HCT116 (cell line): ENCODE measurements at regions of chr12 and their contacts with region 1.

Region 1: GRCh38 chr12:4604684-4605193 is 42.7 kb downstream of the DYRK4 start:
- DNase-seq: peak; percentile 81
- ATAC-seq: peak; percentile 92
- H3K4me3 ChIP-seq: peak overlapping the region; percentile 83 to 89
- H3K27ac ChIP-seq: peak overlapping the region; percentile 34; the same call in 1 of the 2 replicates
- H3K4me1 ChIP-seq: peaks cover 2 to 9% of the 10 kb centered on the region in 2 experiments; a peak in 1 of 4 replicates
- H3K27me3 ChIP-seq: no peaks in the 10 kb centered on the region; the same call in 1 of the 2 replicates
- CTCF ChIP-seq: peak; percentile 44 to 98 (median 96); a peak in 5 of 6 replicates
- POLR2A ChIP-seq: peak; percentile 32
- RAD21 ChIP-seq: peak; percentile 38; the same call in 1 of the 2 replicates

Region 2: DNA sequence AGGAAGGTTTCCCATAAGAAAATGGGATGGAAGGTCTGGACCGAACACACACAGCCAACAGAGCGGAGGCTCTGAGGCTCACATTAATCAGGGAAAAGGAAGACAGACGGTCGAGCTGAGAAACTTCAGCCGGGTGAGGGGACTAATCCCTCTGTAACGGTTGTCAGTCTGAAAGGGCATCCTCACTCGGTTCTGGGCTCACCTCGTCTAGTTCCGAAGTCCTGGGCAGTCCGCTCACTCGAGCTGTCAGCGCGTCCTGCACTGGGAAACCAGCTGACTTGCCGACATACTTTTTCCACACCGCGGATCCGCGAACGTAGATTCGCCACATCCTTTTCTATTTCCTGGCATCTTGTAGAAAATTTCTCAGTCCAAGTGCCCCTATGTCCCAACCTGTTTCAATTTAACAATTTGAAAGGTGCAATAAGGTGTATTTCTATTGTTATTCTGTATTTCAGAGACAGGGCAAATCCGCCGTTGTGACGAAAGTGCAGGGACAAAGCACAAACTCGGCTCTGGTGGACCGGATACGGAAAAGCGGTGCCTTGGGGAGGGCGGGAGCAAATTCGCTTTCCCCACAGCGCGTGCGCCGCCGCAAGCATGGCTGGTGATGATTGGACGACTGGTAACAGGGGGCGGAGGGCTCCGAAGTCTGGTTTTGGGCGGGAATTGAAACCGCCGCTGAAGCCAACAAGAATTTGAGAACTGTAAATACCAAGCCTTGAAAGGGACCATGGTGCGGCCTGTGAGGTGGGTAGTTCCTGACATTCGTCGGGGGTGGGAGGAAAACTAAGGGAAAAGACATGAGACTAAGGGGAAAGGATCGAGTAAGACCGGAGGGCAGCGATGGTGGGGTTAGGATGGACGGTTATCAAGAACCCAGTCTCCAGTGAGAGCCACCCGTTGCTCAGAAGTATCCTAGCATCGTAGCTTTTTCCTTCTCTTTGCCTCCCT is 66.3 kb before region 1 on chr12 and contains the start of gene RAD51AP1:
- CTCF ChIA-PET with region 1: no interaction called
- POLR2A ChIA-PET with region 1: no interaction called
- RAD21 ChIA-PET with region 1: no interaction called
- intact Hi-C with region 1: loop called (anchors 2 kb)
- DNase-seq: peak; percentile 96
- ATAC-seq: peak; percentile 99
- H3K4me3 ChIP-seq: peak within 1 kb of the TSS; percentile 92 to 96
- H3K27ac ChIP-seq: peak within 1 kb of the TSS; percentile 69
- H3K4me1 ChIP-seq: peaks cover 12 to 18% of the 10 kb centered on the region in 2 experiments
- H3K27me3 ChIP-seq: no peaks in the 10 kb centered on the region
- CTCF ChIP-seq: no peak
- POLR2A ChIP-seq: no peak
- RAD21 ChIP-seq: no peak
- total RNA-seq, gene RAD51AP1: 28.2 TPM

Region 3: GRCh38 chr12:4567073-4567881 is 37.5 kb before region 1 on chr12:
- CTCF ChIA-PET with region 1: no interaction called
- POLR2A ChIA-PET with region 1: no interaction called
- RAD21 ChIA-PET with region 1: no interaction called
- intact Hi-C with region 1: no loop called
- DNase-seq: no peak
- ATAC-seq: no peak
- H3K4me3 ChIP-seq: no peak overlapping the region
- H3K27ac ChIP-seq: no peak overlapping the region
- H3K4me1 ChIP-seq: no peaks in the 10 kb centered on the region
- H3K27me3 ChIP-seq: no peaks in the 10 kb centered on the region
- CTCF ChIP-seq: no peak
- POLR2A ChIP-seq: no peak
- RAD21 ChIP-seq: no peak

Region 4: GRCh38 chr12:4648501-4649357 is 44.0 kb after region 1 on chr12 and contains the starts of genes AKAP3 and NDUFA9:
- CTCF ChIA-PET with region 1: no interaction called
- POLR2A ChIA-PET with region 1: no interaction called
- RAD21 ChIA-PET with region 1: no interaction called
- intact Hi-C with region 1: loop called (anchors 2 kb)
- DNase-seq: peak; percentile 66
- ATAC-seq: peak; percentile 95
- H3K4me3 ChIP-seq: peak within 1 kb of the TSS; percentile 94 to 97
- H3K27ac ChIP-seq: peak within 1 kb of the TSS; percentile 77
- H3K4me1 ChIP-seq: peaks cover 10 to 19% of the 10 kb centered on the region in 2 experiments
- H3K27me3 ChIP-seq: no peaks in the 10 kb centered on the region
- CTCF ChIP-seq: no peak
- POLR2A ChIP-seq: peak; percentile 83
- RAD21 ChIP-seq: no peak
- total RNA-seq, gene AKAP3: 4.3 TPM
- total RNA-seq, gene NDUFA9: 95.4 TPM